Naive thymus-derived CD4-positive, alpha-beta T cell (primary cell): ENCODE measurements at regions of chr6 and their contacts with region 1.

Region 1: GRCh38 chr6:35342258-35343091 is at the start of gene PPARD:
- DNase-seq: peak; percentile 92 to 100 (median 96)
- ATAC-seq: peak; percentile 100
- H3K4me3 ChIP-seq: peak within 1 kb of the TSS; percentile 70
- H3K4me3 Mint-ChIP-seq: peak within 1 kb of the TSS; percentile 88 to 100 (median 98)
- H3K27ac ChIP-seq: peak within 1 kb of the TSS; percentile 97
- H3K27ac Mint-ChIP-seq: peak within 1 kb of the TSS; percentile 88 to 98 (median 97)
- H3K4me1 ChIP-seq: peaks cover 19 to 35% of the 10 kb centered on the region in 2 donors
- H3K4me1 Mint-ChIP-seq: peaks cover 38 to 55% (median 49%) of the 10 kb centered on the region in 7 donors
- H3K27me3 ChIP-seq: no peaks in the 10 kb centered on the region
- H3K27me3 Mint-ChIP-seq: peaks cover 0 to 3% (median 0%) of the 10 kb centered on the region in 5 donors
- total RNA-seq, gene PPARD: 29.3 to 47.1 (median 36.0) TPM

Region 2: GRCh38 chr6:35259194-35259947 is 83.1 kb before region 1 on chr6 and contains the start of gene ZNF76:
- CTCF ChIA-PET with region 1: no interaction called
- POLR2A ChIA-PET with region 1: no interaction called
- intact Hi-C with region 1: loop called in 1 of 2 experiments (anchors 1 kb)
- DNase-seq: peak; percentile 89 to 93 (median 92)
- ATAC-seq: peak; percentile 88
- H3K4me3 ChIP-seq: peak within 1 kb of the TSS; percentile 65
- H3K4me3 Mint-ChIP-seq: peak within 1 kb of the TSS; percentile 85 to 99 (median 97)
- H3K27ac ChIP-seq: peak within 1 kb of the TSS; percentile 95
- H3K27ac Mint-ChIP-seq: peak within 1 kb of the TSS; percentile 89 to 99 (median 97)
- H3K4me1 ChIP-seq: peaks cover 15 to 17% of the 10 kb centered on the region in 2 donors
- H3K4me1 Mint-ChIP-seq: peaks cover 37 to 64% (median 50%) of the 10 kb centered on the region in 7 donors
- H3K27me3 ChIP-seq: no peaks in the 10 kb centered on the region
- H3K27me3 Mint-ChIP-seq: no peaks in the 10 kb centered on the region
- total RNA-seq, gene ZNF76: 44.4 to 110 (median 77.2) TPM

Region 3: GRCh38 chr6:35327349-35328027 is 15.0 kb before region 1 on chr6:
- CTCF ChIA-PET with region 1: interaction called, 18 read pairs
- POLR2A ChIA-PET with region 1: interaction called, 6 read pairs
- intact Hi-C with region 1: loop called in 1 of 2 experiments (anchors 1 kb)
- DNase-seq: peak in 8 of 9 donors; percentile 64 to 81 (median 76)
- ATAC-seq: peak; percentile 86
- H3K4me3 ChIP-seq: no peak overlapping the region
- H3K4me3 Mint-ChIP-seq: peak overlapping the region in 9 of 10 donors; percentile 1 to 70 (median 36)
- H3K27ac ChIP-seq: peak overlapping the region; percentile 34
- H3K27ac Mint-ChIP-seq: peak overlapping the region; percentile 65 to 96 (median 86)
- H3K4me1 ChIP-seq: peaks cover 11 to 16% of the 10 kb centered on the region in 2 donors
- H3K4me1 Mint-ChIP-seq: peaks cover 15 to 29% (median 23%) of the 10 kb centered on the region in 7 donors
- H3K27me3 ChIP-seq: no peaks in the 10 kb centered on the region
- H3K27me3 Mint-ChIP-seq: no peaks in the 10 kb centered on the region

Region 4: GRCh38 chr6:35415065-35415991 is 72.9 kb after region 1 on chr6:
- CTCF ChIA-PET with region 1: interaction called, 26 read pairs
- POLR2A ChIA-PET with region 1: interaction called, 6 read pairs
- intact Hi-C with region 1: loop called (anchors 1 to 2 kb)
- DNase-seq: peak in 3 of 9 donors; percentile 23 to 26 (median 25)
- ATAC-seq: peak; percentile 53
- H3K4me3 ChIP-seq: no peak overlapping the region
- H3K4me3 Mint-ChIP-seq: peak overlapping the region in 2 of 10 donors; percentile 37 to 40
- H3K27ac ChIP-seq: no peak overlapping the region
- H3K27ac Mint-ChIP-seq: peak overlapping the region; percentile 5 to 84 (median 71)
- H3K4me1 ChIP-seq: peaks cover 0 to 44% of the 10 kb centered on the region in 2 donors
- H3K4me1 Mint-ChIP-seq: peaks cover 33 to 73% (median 67%) of the 10 kb centered on the region in 7 donors
- H3K27me3 ChIP-seq: no peaks in the 10 kb centered on the region
- H3K27me3 Mint-ChIP-seq: no peaks in the 10 kb centered on the region

Region 5: DNA sequence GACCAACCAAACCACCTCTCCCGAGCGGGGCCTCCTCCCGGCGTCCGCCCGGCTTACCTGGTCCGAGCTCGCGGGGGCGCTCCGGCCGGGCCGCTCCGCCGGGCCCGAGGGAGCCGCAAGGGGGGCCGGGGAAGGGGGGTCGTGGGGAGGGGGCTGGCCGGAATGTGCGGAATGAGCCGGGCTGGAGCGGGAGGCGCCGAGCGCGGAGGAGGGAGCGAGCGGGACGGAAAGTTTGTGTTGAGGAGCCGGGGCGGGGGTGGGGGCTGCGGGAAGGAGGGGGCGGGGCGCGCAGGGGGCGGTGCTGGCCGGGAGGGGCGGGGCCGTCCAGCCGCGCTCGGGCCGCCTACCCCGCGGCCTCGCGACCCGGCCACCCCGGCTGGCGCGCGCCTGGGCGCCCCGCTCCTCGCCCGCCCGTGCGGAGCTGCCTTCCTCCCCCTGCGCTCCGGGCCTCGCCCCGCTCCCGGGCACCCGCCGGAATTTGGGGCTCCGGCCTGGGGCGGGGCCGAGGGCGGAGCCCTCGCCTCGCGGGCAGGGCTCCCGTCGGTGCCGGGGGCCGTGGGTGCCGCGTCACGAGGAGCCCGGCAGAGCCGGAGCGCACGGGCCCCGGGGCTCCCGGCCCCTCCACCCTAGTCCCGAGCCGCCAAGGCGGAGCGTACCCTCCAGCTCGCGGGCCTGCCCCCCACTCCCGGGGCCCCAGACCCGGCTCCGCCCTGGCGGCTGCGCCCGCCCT is 154.5 kb after region 1 on chr6 and contains the start of gene TEAD3:
- CTCF ChIA-PET with region 1: no interaction called
- POLR2A ChIA-PET with region 1: no interaction called
- intact Hi-C with region 1: loop called in 1 of 2 experiments (anchors 1 kb)
- DNase-seq: peak; percentile 25 to 78 (median 49)
- ATAC-seq: peak; percentile 75
- H3K4me3 ChIP-seq: peak within 1 kb of the TSS; percentile 68
- H3K4me3 Mint-ChIP-seq: peak within 1 kb of the TSS; percentile 67 to 87 (median 82)
- H3K27ac ChIP-seq: peak within 1 kb of the TSS; percentile 60
- H3K27ac Mint-ChIP-seq: peak within 1 kb of the TSS in 2 of 9 donors; percentile 47 to 52
- H3K4me1 ChIP-seq: peaks cover 0 to 10% of the 10 kb centered on the region in 2 donors
- H3K4me1 Mint-ChIP-seq: peaks cover 13 to 27% (median 18%) of the 10 kb centered on the region in 7 donors
- H3K27me3 ChIP-seq: peaks cover 0 to 4% of the 10 kb centered on the region in 2 donors
- H3K27me3 Mint-ChIP-seq: peaks cover 0 to 61% (median 10%) of the 10 kb centered on the region in 5 donors
- total RNA-seq, gene TEAD3: 0.16 to 0.27 (median 0.24) TPM in 3 of 5 experiments, not detected in the others

Region 6: DNA sequence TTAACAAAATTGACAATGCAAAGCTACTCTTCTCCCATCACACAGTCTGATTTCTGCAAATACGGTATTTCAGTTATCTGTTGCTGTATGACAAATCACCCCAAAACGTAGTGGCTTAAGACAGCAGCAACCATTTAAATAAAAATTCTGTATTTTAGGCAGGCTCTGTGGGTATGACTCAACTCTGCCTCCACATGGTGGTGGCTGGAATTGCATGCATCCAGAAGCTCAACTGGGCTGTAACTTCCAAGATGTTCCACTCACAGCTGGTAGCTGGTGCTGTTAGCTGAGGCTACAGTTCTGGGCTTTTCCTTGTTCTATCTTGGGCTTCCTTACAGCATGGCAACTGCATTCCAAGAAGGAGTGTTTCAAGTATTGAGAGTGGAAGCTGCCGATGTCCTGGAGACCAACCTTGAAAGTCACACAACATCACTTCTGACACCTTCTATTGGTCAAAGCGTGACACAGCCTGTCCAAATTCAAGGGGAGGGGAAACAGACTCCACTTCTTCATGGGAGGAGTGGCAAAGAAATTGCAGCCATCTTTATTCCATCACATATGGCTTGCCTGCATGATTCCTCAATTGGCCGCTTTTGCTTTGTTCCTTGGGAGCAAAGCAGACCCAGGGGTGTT is 209.9 kb after region 1 on chr6:
- CTCF ChIA-PET with region 1: no interaction called
- POLR2A ChIA-PET with region 1: no interaction called
- intact Hi-C with region 1: loop called (anchors 1 to 2 kb)
- DNase-seq: peak; percentile 36 to 69 (median 60)
- ATAC-seq: peak; percentile 84
- H3K4me3 ChIP-seq: no peak overlapping the region
- H3K4me3 Mint-ChIP-seq: no peak overlapping the region
- H3K27ac ChIP-seq: no peak overlapping the region
- H3K27ac Mint-ChIP-seq: peak overlapping the region in 1 of 9 donors; percentile 67
- H3K4me1 ChIP-seq: no peaks in the 10 kb centered on the region
- H3K4me1 Mint-ChIP-seq: peaks cover 0 to 8% (median 6%) of the 10 kb centered on the region in 7 donors
- H3K27me3 ChIP-seq: no peaks in the 10 kb centered on the region
- H3K27me3 Mint-ChIP-seq: peaks cover 0 to 17% (median 0%) of the 10 kb centered on the region in 5 donors

Region 7: GRCh38 chr6:35737413-35738211 is 395.1 kb after region 1 on chr6:
- CTCF ChIA-PET with region 1: interaction called, 5 read pairs
- POLR2A ChIA-PET with region 1: no interaction called
- intact Hi-C with region 1: loop called (anchors 1 to 2 kb)
- DNase-seq: peak in 7 of 9 donors; percentile 60 to 80 (median 73)
- ATAC-seq: peak; percentile 83
- H3K4me3 ChIP-seq: no peak overlapping the region
- H3K4me3 Mint-ChIP-seq: peak overlapping the region in 8 of 10 donors; percentile 51 to 75 (median 62)
- H3K27ac ChIP-seq: peak overlapping the region; percentile 22
- H3K27ac Mint-ChIP-seq: peak overlapping the region; percentile 28 to 98 (median 90)
- H3K4me1 ChIP-seq: peaks cover 31 to 51% of the 10 kb centered on the region in 2 donors
- H3K4me1 Mint-ChIP-seq: peaks cover 21 to 50% (median 42%) of the 10 kb centered on the region in 7 donors
- H3K27me3 ChIP-seq: no peaks in the 10 kb centered on the region
- H3K27me3 Mint-ChIP-seq: no peaks in the 10 kb centered on the region